Activated CD4-positive, alpha-beta memory T cell treated with anti-CD3 and anti-CD28 coated beads, Interleukin-2, amount 10 ng/mL, durations not matched to agents 7 days and 5 days (primary cell): ENCODE measurements at regions of chr1 and their contacts with region 1.

Region 1: GRCh38 chr1:8925406-8925805 is 20.3 kb upstream of the CA6 start:
- DNase-seq: no peak
- H3K4me3 Mint-ChIP-seq: no peak overlapping the region
- H3K27ac Mint-ChIP-seq: no peak overlapping the region
- H3K4me1 Mint-ChIP-seq: peaks cover 27% of the 10 kb centered on the region
- H3K27me3 Mint-ChIP-seq: no peaks in the 10 kb centered on the region

Region 2: GRCh38 chr1:8817406-8818324 is 107.7 kb before region 1 on chr1 and contains the start of gene RERE:
- CTCF ChIA-PET with region 1: no interaction called
- POLR2A ChIA-PET with region 1: no interaction called
- DNase-seq: peak; percentile 97
- H3K4me3 Mint-ChIP-seq: peak within 1 kb of the TSS; percentile 82
- H3K27ac Mint-ChIP-seq: peak within 1 kb of the TSS; percentile 75
- H3K4me1 Mint-ChIP-seq: peaks cover 48% of the 10 kb centered on the region
- H3K27me3 Mint-ChIP-seq: peaks cover 7% of the 10 kb centered on the region
- total RNA-seq, gene RERE: 96.6 to 101 TPM

Region 3: DNA sequence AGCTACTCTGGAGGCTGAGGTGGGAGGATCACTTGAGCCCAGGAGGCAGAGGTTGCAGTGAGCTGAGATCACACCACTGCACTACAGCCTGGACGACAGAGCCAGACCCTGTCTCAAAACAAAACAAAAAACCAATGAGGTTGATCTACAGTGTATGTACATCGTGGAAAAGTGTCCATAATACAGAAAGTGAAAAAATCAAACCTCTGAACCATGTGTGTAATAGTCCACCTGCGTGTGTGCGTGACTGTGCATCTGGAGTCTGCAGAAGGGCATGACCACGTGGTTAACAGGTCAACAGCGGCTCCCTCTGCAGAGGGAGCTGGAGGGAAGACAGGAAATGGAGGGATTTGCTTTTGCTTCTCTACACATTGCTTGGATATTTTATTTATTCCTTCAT is 14.5 kb before region 1 on chr1:
- CTCF ChIA-PET with region 1: no interaction called
- POLR2A ChIA-PET with region 1: no interaction called
- DNase-seq: no peak
- H3K4me3 Mint-ChIP-seq: no peak overlapping the region
- H3K27ac Mint-ChIP-seq: no peak overlapping the region
- H3K4me1 Mint-ChIP-seq: peaks cover 17% of the 10 kb centered on the region
- H3K27me3 Mint-ChIP-seq: peaks cover 14% of the 10 kb centered on the region

Region 4: DNA sequence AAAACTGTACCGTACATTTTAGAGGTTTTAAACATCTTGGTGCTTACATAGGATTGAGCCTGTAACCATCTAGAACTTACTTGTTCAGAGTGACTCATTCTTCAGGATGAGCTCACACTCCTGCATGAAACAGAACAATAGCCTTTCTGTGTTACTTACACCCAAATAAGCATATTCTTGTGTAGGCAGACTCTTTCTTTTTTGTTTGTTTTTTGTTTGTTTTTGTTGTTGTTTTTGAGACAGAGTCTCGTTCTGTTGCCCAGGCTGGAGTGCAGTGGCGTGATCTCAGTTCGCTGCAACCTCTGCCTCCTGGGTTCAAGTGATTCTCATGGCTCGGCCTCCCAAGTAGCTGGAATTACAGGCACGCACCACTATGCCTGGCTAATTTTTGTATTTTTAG is 16.5 kb after region 1 on chr1:
- CTCF ChIA-PET with region 1: interaction called, 26 read pairs
- POLR2A ChIA-PET with region 1: interaction called, 6 read pairs
- DNase-seq: no peak
- H3K4me3 Mint-ChIP-seq: no peak overlapping the region
- H3K27ac Mint-ChIP-seq: peak overlapping the region; percentile 34
- H3K4me1 Mint-ChIP-seq: peaks cover 88% of the 10 kb centered on the region
- H3K27me3 Mint-ChIP-seq: no peaks in the 10 kb centered on the region

Region 5: DNA sequence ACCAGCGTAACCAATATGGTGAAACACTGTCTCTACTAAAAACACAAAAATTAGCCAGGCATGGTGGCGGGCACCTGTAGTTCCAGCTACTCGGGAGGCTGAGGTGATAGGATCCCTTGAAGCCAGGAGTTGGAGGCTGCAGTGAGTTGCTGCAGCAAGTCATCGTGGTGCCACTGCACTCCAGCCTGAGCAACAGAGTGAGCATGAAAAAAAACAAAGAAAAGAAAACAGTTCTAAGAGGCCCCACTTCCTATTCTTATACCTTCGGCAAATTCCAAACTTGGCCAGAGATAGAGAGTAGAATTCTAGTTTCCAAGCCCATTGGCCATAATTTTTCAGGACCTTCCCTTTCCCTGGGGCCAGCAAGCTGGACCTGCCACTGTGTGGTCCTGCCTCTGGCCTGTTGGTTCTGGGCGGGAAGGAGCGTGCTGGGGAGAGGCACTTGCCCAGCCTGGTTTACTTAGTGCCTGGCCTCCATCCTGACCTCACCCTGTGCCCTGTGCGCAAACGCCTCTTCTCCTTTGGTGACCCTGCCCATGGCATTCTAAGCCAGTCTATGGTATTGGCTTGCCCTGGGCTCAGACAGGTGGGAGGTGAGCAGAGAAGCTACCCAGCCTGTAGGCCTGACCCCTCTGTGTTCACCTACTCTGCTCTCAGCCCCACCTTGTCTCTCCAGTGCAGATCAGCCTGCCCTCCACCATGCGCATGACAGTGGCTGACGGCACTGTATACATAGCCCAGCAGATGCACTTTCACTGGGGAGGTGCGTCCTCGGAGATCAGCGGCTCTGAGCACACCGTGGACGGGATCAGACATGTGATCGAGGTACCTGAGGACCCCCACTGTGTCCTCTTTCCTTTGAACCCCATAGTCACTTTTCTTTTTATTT is 31.3 kb after region 1 on chr1:
- CTCF ChIA-PET with region 1: no interaction called
- POLR2A ChIA-PET with region 1: no interaction called
- DNase-seq: no peak
- H3K4me3 Mint-ChIP-seq: no peak overlapping the region
- H3K27ac Mint-ChIP-seq: no peak overlapping the region
- H3K4me1 Mint-ChIP-seq: peaks cover 29% of the 10 kb centered on the region
- H3K27me3 Mint-ChIP-seq: no peaks in the 10 kb centered on the region

Region 6: GRCh38 chr1:8970870-8971337 is 45.5 kb after region 1 on chr1:
- CTCF ChIA-PET with region 1: no interaction called
- POLR2A ChIA-PET with region 1: interaction called, 15 read pairs
- DNase-seq: peak; percentile 57
- H3K4me3 Mint-ChIP-seq: peak overlapping the region; percentile 98
- H3K27ac Mint-ChIP-seq: peak overlapping the region; percentile 99
- H3K4me1 Mint-ChIP-seq: peaks cover 56% of the 10 kb centered on the region
- H3K27me3 Mint-ChIP-seq: no peaks in the 10 kb centered on the region

Region 7: DNA sequence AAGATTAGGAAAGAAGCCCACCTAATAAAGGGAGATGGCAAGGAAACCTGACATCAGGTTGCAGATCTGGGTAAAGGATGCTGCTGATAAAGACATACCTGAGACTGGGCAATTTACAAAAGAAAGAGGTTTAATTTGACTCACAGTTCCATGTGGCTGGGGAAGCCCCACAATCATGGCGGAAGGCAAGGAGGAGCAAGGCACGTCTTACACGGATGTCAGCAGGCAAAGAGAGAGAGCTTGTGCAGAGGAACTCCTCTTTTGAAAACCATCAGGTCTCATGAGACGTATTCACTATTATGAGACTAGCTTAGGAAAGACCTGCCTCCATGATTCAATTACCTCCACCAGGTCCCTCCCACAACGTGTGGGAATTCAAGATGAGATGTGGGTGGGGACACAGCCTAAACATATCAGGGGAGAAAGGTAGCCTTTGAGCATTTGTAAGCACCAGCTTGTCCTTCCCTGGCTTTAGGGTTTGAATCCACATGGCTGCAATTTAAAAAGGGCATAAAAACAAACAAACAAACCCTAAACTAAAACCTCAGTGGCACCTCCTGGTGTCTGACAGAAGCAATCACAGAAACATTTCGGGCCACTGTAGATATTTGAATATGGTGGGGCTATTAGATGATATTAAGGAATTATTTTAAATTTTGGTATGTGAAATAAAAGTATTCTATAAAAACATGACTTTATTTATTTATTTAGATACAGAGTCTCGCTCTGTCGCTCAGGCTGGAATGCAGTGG is 67.7 kb after region 1 on chr1:
- CTCF ChIA-PET with region 1: interaction called, 118 read pairs
- POLR2A ChIA-PET with region 1: interaction called, 12 read pairs
- DNase-seq: no peak
- H3K4me3 Mint-ChIP-seq: no peak overlapping the region
- H3K27ac Mint-ChIP-seq: no peak overlapping the region
- H3K4me1 Mint-ChIP-seq: peaks cover 20% of the 10 kb centered on the region
- H3K27me3 Mint-ChIP-seq: peaks cover 5% of the 10 kb centered on the region